Caco-2 (cell line): ENCODE measurements at regions of chr5 and their contacts with region 1.

Region 1: DNA sequence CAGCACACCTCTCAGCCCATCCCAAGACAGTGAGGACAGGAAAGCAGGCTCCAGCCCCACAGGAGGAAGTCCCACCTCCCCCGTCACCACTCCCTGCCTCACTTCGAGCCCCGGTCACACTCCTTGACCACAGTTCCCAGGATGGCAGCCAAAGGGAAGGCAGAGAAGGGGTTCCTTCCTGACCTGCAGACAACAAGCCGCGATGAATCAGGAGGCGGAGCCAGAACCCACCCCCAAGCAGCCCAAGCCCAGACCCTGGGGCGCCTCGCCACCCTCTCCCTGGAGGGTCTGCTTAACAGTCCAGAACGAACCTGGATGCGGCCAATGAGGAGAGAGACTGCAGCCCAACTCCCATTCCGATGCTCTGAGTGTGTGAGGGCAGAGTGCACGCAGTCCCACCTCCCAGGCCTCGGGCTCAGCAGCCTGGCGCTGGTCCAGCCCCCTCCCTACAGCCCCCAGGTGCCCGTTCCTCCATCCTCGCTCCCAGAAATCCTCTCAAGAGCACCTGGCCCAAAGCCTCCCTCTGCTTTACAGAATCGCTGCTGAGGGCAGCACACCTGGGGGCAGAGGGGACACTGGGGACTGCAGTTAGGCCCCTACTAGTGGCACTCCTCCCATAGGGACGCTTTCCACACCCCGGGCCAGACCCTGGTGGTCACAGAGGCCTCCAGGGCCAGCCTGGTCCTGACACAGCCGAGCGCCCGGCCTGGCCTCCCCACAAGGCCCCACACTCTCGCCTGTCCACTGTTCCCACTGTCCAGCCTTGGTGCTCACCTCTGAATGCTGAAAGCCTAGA is 69.6 kb upstream of the LRRTM2 start:
- DNase-seq: no peak
- H3K4me3 ChIP-seq: no peak overlapping the region
- H3K4me3 Mint-ChIP-seq: no peak overlapping the region
- H3K27ac Mint-ChIP-seq: peak overlapping the region; percentile 56
- H3K4me1 ChIP-seq: no peaks in the 10 kb centered on the region
- H3K4me1 Mint-ChIP-seq: no peaks in the 10 kb centered on the region
- H3K27me3 ChIP-seq: no peaks in the 10 kb centered on the region
- H3K27me3 Mint-ChIP-seq: no peaks in the 10 kb centered on the region
- CTCF ChIP-seq: no peak

Region 2: GRCh38 chr5:138641547-138642298 is 303.0 kb before region 1 on chr5:
- CTCF ChIA-PET with region 1: no interaction called
- POLR2A ChIA-PET with region 1: no interaction called
- intact Hi-C with region 1: loop called (anchors 5 kb)
- DNase-seq: peak; percentile 78 to 83
- H3K4me3 ChIP-seq: no peak overlapping the region
- H3K4me3 Mint-ChIP-seq: no peak overlapping the region
- H3K27ac Mint-ChIP-seq: no peak overlapping the region
- H3K4me1 ChIP-seq: no peaks in the 10 kb centered on the region
- H3K4me1 Mint-ChIP-seq: no peaks in the 10 kb centered on the region
- H3K27me3 ChIP-seq: no peaks in the 10 kb centered on the region
- H3K27me3 Mint-ChIP-seq: no peaks in the 10 kb centered on the region
- CTCF ChIP-seq: peak; percentile 77 to 84

Region 3: DNA sequence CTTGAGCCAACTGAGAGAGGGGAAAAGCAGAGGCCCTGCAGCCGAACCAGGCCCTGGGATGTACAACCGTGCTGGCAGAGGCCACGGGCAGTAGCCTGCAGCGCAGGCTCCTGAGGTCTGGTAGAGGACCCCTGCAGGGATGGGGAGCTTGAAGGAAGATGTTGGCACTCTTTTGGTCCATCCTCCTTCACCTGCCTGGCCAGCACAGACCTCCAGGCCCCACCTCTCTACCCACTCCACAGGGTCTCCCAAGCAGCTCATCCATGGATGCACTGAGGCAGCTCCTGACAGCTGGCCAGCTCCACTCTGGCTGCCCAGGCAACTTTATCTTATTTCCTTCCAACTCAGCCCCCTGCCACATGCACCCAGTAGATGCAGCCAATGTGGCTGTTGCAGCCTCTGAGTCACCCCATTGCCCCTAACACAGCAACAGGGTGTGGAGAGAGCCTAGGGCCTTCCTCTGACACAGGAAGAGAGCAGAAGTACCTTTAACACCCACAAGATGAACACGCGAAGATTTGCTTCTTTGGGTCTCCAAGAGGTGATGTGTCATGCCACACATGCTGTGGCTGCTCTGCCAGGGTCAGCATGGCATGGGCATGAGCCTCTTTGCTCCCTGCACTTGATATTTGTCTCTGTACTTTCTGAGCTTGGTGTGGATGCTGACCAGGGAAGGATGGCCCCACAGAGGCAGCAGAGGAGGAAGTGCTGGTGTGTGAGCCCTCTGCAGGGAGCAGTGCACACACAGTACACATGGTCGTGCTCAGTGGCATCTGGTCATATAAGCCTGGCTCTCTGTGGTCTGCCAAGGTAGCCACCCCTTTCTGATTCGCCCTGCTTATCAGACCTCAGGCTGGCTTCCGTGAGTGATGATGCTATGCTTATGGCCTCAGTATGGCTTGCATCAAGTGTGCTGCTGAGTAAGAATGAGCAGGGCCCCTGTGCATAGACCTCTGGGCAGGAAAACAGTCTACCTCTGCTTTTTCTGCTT is 981.2 kb after region 1 on chr5:
- CTCF ChIA-PET with region 1: no interaction called
- POLR2A ChIA-PET with region 1: no interaction called
- intact Hi-C with region 1: no loop called
- DNase-seq: no peak
- H3K4me3 ChIP-seq: no peak overlapping the region
- H3K4me3 Mint-ChIP-seq: no peak overlapping the region
- H3K27ac Mint-ChIP-seq: no peak overlapping the region
- H3K4me1 ChIP-seq: no peaks in the 10 kb centered on the region
- H3K4me1 Mint-ChIP-seq: no peaks in the 10 kb centered on the region
- H3K27me3 ChIP-seq: no peaks in the 10 kb centered on the region
- H3K27me3 Mint-ChIP-seq: peaks cover 25% of the 10 kb centered on the region
- CTCF ChIP-seq: no peak